KBM-7 (cell line): ENCODE measurements at regions of chr4 and their contacts with region 1.

Region 1: DNA sequence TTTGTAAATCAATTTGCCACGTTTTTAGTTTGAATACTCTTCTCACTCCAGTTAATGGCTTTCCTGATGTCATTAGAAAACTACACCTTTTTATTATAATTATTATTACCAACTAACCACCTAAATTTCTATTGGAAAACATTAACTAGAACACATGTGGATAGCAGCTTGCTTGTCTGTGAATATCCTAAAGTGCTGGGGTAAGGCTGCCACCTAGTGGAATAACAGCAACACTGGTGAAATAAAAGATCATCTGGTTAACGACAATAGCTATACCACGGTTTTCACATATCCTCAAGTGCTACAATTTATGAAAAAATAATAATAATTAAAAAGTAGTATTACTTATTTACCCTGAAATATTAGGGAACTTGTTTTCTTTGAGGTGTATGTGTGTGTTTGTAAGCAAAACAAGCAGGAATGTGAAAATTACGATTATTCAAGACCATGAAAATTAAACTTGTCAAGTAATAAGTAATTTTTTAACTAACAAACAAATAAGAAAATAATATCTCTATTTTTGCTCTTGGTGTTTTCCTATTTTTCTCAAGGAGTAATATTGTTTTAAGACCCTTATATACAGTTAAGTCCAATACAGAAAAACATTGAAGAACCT is 130.1 kb upstream of the TECRL start:
- DNase-seq: peak; percentile 53

Region 2: GRCh38 chr4:64158648-64159326 is 380.6 kb before region 1 on chr4:
- in situ Hi-C with region 1: loop called (anchors 25 kb)
- DNase-seq: peak; percentile 72

Region 3: DNA sequence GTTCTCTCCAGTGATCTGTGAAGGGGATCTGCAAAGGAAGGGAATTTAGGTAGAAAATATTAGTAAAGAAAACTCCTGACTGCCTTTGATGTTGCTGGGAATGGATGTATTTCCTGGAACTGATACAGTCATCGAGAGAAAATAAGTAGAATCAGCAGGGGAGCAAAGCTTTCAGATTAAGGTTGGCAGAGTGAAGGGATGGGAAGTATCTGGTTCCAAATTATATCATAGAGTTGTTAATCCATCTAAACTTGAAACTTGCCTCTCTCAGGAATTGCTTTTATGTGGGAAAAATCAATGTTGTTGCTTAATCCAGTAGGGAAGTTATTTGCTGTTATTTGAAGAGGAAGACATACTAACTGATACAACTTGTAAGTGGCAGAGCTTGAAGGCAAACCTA is 1111.7 kb after region 1 on chr4:
- in situ Hi-C with region 1: no loop called
- DNase-seq: no peak